Activated CD4-positive, alpha-beta T cell treated with anti-CD3 and anti-CD28 coated beads, Interleukin-2, amount 10 ng/mL, durations not matched to agents 24 days and 14 days (primary cell): ENCODE measurements at regions of chr12 and their contacts with region 1.

Region 1: GRCh38 chr12:123075646-123076171 is 75.2 kb downstream of the PITPNM2 start:
- DNase-seq: peak; percentile 95
- H3K4me3 Mint-ChIP-seq: peak overlapping the region; percentile 85
- H3K27ac Mint-ChIP-seq: peak overlapping the region; percentile 98
- H3K4me1 Mint-ChIP-seq: peaks cover 44% of the 10 kb centered on the region
- H3K27me3 Mint-ChIP-seq: no peaks in the 10 kb centered on the region

Region 2: GRCh38 chr12:122871851-122872780 is 203.6 kb before region 1 on chr12:
- intact Hi-C with region 1: loop called (anchors 10 kb)
- DNase-seq: peak; percentile 84
- H3K4me3 Mint-ChIP-seq: peak overlapping the region; percentile 79
- H3K27ac Mint-ChIP-seq: peak overlapping the region; percentile 76
- H3K4me1 Mint-ChIP-seq: peaks cover 55% of the 10 kb centered on the region
- H3K27me3 Mint-ChIP-seq: peaks cover 16% of the 10 kb centered on the region

Region 3: GRCh38 chr12:122974274-122974891 is 101.3 kb before region 1 on chr12:
- intact Hi-C with region 1: loop called (anchors 2 kb)
- DNase-seq: peak; percentile 100
- H3K4me3 Mint-ChIP-seq: peak overlapping the region; percentile 94
- H3K27ac Mint-ChIP-seq: peak overlapping the region; percentile 99
- H3K4me1 Mint-ChIP-seq: peaks cover 19% of the 10 kb centered on the region
- H3K27me3 Mint-ChIP-seq: no peaks in the 10 kb centered on the region

Region 4: GRCh38 chr12:123043536-123044001 is 32.1 kb before region 1 on chr12:
- intact Hi-C with region 1: loop called (anchors 1 kb)
- DNase-seq: peak; percentile 89
- H3K4me3 Mint-ChIP-seq: no peak overlapping the region
- H3K27ac Mint-ChIP-seq: peak overlapping the region; percentile 78
- H3K4me1 Mint-ChIP-seq: peaks cover 22% of the 10 kb centered on the region
- H3K27me3 Mint-ChIP-seq: no peaks in the 10 kb centered on the region

Region 5: DNA sequence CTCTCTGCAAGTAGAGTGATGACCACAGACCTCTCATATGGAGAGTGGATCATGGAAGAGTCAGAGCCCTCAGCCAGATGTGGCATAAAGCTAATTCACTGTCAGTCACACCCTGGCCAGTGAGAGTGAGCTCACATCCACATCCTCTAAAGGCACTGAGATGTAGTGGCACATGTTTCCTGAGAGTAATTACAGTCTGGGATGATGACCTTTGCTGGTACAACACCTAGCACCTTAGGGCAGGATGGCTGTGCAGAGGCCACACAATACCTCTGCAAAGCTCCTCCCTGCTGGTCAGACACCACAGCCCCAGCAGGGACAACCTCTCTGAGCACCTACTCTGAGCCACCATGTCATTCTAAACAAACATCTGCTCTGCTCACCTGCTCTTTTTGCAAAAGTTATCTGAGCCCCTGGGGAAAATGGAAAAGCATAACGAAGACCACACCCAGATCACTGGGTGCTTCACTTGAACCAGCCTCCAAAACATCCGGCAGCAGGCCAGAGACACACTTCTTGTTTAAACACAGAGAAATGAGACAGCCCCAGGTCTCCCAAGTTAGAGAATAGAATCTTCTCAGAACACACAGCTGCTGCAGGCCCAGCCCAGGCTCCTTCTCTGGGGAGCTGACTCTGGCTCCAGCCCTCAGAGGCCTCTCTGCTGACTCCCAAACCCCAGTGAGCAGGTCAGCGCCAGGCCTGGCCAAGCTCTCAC is 44.9 kb after region 1 on chr12:
- intact Hi-C with region 1: loop called (anchors 1 kb)
- DNase-seq: peak; percentile 81
- H3K4me3 Mint-ChIP-seq: peak overlapping the region; percentile 64
- H3K27ac Mint-ChIP-seq: peak overlapping the region; percentile 90
- H3K4me1 Mint-ChIP-seq: peaks cover 49% of the 10 kb centered on the region
- H3K27me3 Mint-ChIP-seq: no peaks in the 10 kb centered on the region

Region 6: DNA sequence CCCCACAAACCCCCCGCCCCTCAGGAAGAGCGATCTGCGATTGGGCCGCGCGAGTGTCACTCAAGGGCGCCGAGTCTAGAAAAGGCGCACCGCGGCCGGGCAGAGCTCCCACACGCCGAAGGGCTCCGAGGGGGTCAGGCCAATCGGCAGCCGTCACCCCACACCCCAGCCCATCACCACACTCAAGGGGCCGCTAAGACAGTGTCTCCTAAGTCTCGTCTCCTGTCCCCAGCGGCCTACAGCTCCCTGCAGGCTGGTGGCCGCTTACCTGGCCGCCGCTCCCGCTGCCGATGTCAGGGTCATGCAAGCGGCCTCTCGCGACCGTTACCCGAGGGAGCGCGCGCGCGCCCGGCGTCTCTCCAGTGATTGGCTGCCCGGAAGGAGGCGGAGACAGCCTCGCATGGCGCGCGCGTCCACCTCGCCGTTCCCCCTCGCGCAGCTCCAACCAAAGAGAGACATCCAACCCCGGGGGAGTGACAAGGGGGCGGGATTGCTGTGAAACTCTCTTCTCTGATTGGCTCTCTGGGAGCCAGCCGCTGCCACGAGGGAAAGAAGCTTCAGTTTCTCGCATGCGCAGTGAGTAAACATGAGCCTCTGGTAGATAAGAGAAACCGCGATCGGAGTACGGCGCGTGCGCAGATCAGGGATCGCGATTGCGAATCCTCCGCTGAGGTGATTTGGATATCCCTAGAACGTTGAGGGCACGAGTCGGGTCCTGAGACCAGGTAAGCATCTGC is 157.3 kb after region 1 on chr12 and contains the starts of genes MPHOSPH9 and MTRFR:
- intact Hi-C with region 1: loop called (anchors 1 kb)
- DNase-seq: peak; percentile 100
- H3K4me3 Mint-ChIP-seq: peak within 1 kb of the TSS; percentile 95
- H3K27ac Mint-ChIP-seq: peak within 1 kb of the TSS; percentile 99
- H3K4me1 Mint-ChIP-seq: peaks cover 48% of the 10 kb centered on the region
- H3K27me3 Mint-ChIP-seq: peaks cover 3% of the 10 kb centered on the region
- total RNA-seq, gene MPHOSPH9: 87.1 and 90.3 TPM in 2 replicates
- total RNA-seq, gene MTRFR: 30.3 and 30.5 TPM in 2 replicates

Region 7: GRCh38 chr12:123713398-123713797 is 637.7 kb after region 1 on chr12:
- intact Hi-C with region 1: loop called (anchors 10 kb)
- DNase-seq: peak; percentile 74
- H3K4me3 Mint-ChIP-seq: peak overlapping the region; percentile 98
- H3K27ac Mint-ChIP-seq: peak overlapping the region; percentile 93
- H3K4me1 Mint-ChIP-seq: peaks cover 36% of the 10 kb centered on the region
- H3K27me3 Mint-ChIP-seq: no peaks in the 10 kb centered on the region